ENCODE measurements at regions of chr17 and their contacts with region 1.

Region 1: GRCh38 chr17:50094753-50095619 is at the start of gene PDK2:
- DNase-seq: peak; percentile 99
- H3K4me3 Mint-ChIP-seq: peak within 1 kb of the TSS; percentile 89
- H3K27ac Mint-ChIP-seq: peak within 1 kb of the TSS; percentile 93
- H3K4me1 Mint-ChIP-seq: peaks cover 24% of the 10 kb centered on the region
- H3K27me3 Mint-ChIP-seq: no peaks in the 10 kb centered on the region
- total RNA-seq, gene PDK2: 10.9 and 11.8 TPM in 2 replicates

Region 2: GRCh38 chr17:50055426-50056230 is 39.4 kb before region 1 on chr17 and contains the start of gene ITGA3:
- intact Hi-C with region 1: loop called (anchors 2 kb)
- DNase-seq: peak; percentile 92
- H3K4me3 Mint-ChIP-seq: peak within 1 kb of the TSS; percentile 96
- H3K27ac Mint-ChIP-seq: peak within 1 kb of the TSS; percentile 89
- H3K4me1 Mint-ChIP-seq: peaks cover 42% of the 10 kb centered on the region
- H3K27me3 Mint-ChIP-seq: peaks cover 3% of the 10 kb centered on the region
- total RNA-seq, gene ITGA3: 14.5 and 15.0 TPM in 2 replicates

Region 3: GRCh38 chr17:50133028-50133768 is 38.2 kb after region 1 on chr17:
- intact Hi-C with region 1: loop called (anchors 2 kb)
- DNase-seq: no peak
- H3K4me3 Mint-ChIP-seq: no peak overlapping the region
- H3K27ac Mint-ChIP-seq: no peak overlapping the region
- H3K4me1 Mint-ChIP-seq: peaks cover 36% of the 10 kb centered on the region
- H3K27me3 Mint-ChIP-seq: peaks cover 14% of the 10 kb centered on the region

Region 4: DNA sequence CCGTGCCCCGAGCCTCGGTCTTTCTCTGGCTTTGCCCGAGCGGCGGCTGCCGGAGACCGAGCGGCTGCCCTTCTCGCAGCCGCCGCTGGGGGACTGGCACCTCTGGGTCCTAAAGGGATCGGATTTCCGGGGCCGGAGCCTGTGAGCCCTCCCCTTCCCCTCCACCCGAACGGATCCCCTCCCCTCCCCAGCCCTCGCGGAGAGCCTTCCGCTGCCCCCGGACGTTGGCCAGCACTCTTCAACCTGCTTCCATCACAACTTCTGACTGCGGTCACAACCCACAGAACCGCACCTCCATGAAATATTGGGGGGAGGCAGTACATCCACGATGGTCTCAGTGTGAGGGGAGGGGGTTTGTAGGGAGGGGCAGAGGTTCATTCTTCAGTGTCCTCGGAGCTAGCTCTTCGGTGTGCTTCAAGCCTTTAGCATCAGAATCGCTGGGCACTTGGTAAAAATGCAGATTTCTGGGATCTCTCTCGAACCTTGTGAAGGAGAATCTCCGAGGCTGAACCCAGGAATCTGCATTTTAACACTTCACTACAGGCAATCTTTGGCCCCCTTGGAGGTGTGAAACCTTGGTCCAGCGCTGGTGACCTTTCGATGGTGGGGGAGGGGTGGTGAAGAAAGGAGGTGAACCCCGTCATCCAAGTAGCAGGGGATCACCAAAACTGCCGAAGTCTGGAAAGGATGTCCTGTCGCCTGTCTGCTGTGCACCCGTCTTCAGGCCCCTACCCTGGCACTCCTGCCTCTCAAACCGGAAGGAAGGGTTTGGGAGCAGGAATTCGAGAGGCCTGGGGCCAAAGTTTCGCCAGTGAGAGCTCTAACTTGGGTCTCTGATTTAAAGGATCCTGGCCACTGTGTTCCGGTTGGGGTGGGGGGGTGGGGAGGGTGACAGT is 56.3 kb after region 1 on chr17:
- intact Hi-C with region 1: loop called (anchors 1 kb)
- DNase-seq: peak; percentile 97
- H3K4me3 Mint-ChIP-seq: peak overlapping the region; percentile 93
- H3K27ac Mint-ChIP-seq: peak overlapping the region; percentile 96
- H3K4me1 Mint-ChIP-seq: peaks cover 44% of the 10 kb centered on the region
- H3K27me3 Mint-ChIP-seq: no peaks in the 10 kb centered on the region